Uterus (tissue), 4 donors: ENCODE measurements at regions of chr12 and their contacts with region 1.

Region 1: DNA sequence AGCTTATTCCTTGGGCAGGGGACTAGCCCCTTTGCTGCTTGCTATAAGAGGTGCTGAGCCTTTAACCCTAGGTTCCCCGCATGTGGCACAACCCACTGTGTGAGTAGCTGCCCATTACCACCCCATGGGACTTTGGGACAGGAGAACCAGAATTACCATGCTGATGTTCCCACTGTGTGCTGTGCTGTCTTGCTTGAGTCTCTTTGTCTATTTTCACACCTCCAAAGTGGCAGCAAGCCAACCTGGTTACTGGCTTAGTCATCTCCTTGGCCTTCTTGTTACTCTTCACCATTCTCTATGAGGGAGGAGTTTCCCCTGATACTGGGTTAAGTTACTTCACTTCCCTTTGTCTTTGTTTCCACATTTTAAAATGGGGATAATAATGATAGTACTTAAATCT is 73.4 kb upstream of the ETV6 start:
- DNase-seq: no peak
- H3K4me3 ChIP-seq: no peak overlapping the region
- H3K27ac ChIP-seq: no peak overlapping the region
- H3K4me1 ChIP-seq: no peaks in the 10 kb centered on the region
- H3K27me3 ChIP-seq: no peaks in the 10 kb centered on the region
- CTCF ChIP-seq: no peak
- POLR2A ChIP-seq: no peak

Region 2: GRCh38 chr12:11460343-11461023 is 115.6 kb before region 1 on chr12:
- intact Hi-C with region 1: no loop called
- DNase-seq: no peak
- H3K4me3 ChIP-seq: no peak overlapping the region
- H3K27ac ChIP-seq: no peak overlapping the region
- H3K4me1 ChIP-seq: no peaks in the 10 kb centered on the region
- H3K27me3 ChIP-seq: no peaks in the 10 kb centered on the region
- CTCF ChIP-seq: no peak
- POLR2A ChIP-seq: no peak

Region 3: DNA sequence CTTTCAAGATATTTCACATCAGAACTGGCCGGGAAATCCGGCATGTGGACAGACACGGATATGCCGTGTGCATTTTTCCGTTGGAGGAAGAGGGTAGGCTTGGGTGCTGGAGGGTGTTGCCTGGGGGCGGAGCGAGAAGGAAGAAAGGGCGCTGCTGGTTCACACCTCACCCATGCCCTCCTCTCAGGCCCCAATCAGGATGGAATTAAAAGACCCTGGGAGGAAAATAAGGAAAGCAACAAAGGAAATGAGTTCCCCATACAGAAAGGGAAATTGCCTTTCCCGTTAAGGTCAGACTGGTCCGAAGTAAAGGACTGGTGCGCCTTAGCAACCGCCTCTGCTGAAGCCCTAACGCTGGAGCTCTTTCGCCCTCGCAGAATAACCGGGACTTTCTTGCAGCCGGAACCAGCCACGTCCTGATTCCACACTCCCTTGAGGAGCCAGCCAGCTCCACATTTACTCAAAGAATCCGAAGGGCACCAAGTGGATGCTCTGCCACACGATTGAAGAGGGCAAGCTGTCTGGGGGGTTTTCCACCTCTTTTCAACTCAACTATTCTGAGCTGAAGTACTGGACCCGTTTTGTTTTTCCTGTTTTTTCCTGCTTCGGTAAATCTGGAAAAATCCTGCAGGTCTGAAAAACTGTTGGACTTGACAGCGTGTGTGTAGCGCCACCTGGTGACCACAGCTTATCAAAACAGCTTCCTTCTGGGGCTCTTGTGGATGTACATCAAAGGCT is 456.9 kb after region 1 on chr12:
- intact Hi-C with region 1: loop called (anchors 5 kb)
- DNase-seq: peak; percentile 75 to 77
- H3K4me3 ChIP-seq: peak overlapping the region; percentile 29
- H3K27ac ChIP-seq: peak overlapping the region; percentile 58 to 82
- H3K4me1 ChIP-seq: no peaks in the 10 kb centered on the region
- H3K27me3 ChIP-seq: no peaks in the 10 kb centered on the region
- CTCF ChIP-seq: peak; percentile 81 to 92 (median 88)
- POLR2A ChIP-seq: no peak